ENCODE measurements at regions of chr6 and their contacts with region 1.

Region 1: GRCh38 chr6:43143235-43144124 is 27.6 kb upstream of the SRF start:
- DNase-seq: peak; percentile 94 to 95
- H3K4me3 ChIP-seq: no peak overlapping the region
- H3K27ac ChIP-seq: peak overlapping the region; percentile 54 to 60
- H3K4me1 ChIP-seq: peaks cover 0 to 9% of the 10 kb centered on the region in 2 donors
- H3K27me3 ChIP-seq: no peaks in the 10 kb centered on the region
- CTCF ChIP-seq: peak; percentile 95 to 99 (median 98)
- POLR2A ChIP-seq: peak in 1 of 2 donors; percentile 34

Region 2: DNA sequence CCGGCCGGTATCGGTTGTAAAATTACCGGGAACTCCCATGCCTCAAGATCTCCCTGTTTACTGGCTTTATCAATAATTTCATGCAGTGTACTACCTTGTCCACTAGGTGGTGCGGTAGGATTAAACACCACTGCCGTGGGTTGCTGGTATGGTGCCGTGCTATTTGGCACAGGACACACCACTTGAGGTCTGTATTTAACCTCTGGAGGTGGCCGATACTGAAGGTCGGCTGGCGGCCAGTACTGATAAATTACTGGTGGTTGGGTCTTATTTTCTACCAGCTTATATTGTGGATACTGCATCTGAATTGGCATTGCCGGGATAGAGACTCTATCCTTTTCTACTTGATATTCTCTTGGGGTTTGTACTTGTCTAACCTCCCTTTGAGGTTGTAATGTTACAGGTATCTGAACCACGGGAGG is 241.9 kb before region 1 on chr6:
- intact Hi-C with region 1: loop called (anchors 5 kb)
- DNase-seq: peak; percentile 74 to 84
- H3K4me3 ChIP-seq: peak overlapping the region in 1 of 2 donors; percentile 20
- H3K27ac ChIP-seq: peak overlapping the region in 1 of 2 donors; percentile 12
- H3K4me1 ChIP-seq: no peaks in the 10 kb centered on the region
- H3K27me3 ChIP-seq: no peaks in the 10 kb centered on the region
- CTCF ChIP-seq: peak; percentile 88 to 95 (median 92)
- POLR2A ChIP-seq: no peak

Measured in uterus (tissue), 4 donors.